ENCODE measurements at regions of chr4 and their contacts with region 1.

Region 1: GRCh38 chr4:155371432-155372043 is 5.2 kb downstream of the MAP9 start:
- DNase-seq: peak; percentile 48
- ATAC-seq: no peak
- H3K4me3 ChIP-seq: no peak overlapping the region
- H3K4me3 Mint-ChIP-seq: no peak overlapping the region
- H3K27ac ChIP-seq: no peak overlapping the region
- H3K27ac Mint-ChIP-seq: no peak overlapping the region
- H3K4me1 ChIP-seq: peaks cover 0 to 8% of the 10 kb centered on the region in 2 donors
- H3K4me1 Mint-ChIP-seq: peaks cover 9% of the 10 kb centered on the region
- H3K27me3 ChIP-seq: no peaks in the 10 kb centered on the region
- H3K27me3 Mint-ChIP-seq: no peaks in the 10 kb centered on the region
- CTCF ChIP-seq: peak; percentile 80

Region 2: GRCh38 chr4:154551872-154552686 is 819.5 kb before region 1 on chr4:
- CTCF ChIA-PET with region 1: interaction called, 10 read pairs
- POLR2A ChIA-PET with region 1: interaction called, 4 read pairs
- intact Hi-C with region 1: loop called (anchors 1 kb)
- DNase-seq: peak; percentile 80
- ATAC-seq: peak; percentile 54
- H3K4me3 ChIP-seq: no peak overlapping the region
- H3K4me3 Mint-ChIP-seq: no peak overlapping the region
- H3K27ac ChIP-seq: no peak overlapping the region
- H3K27ac Mint-ChIP-seq: no peak overlapping the region
- H3K4me1 ChIP-seq: peaks cover 18% of the 10 kb centered on the region in 2 donors
- H3K4me1 Mint-ChIP-seq: peaks cover 21% of the 10 kb centered on the region
- H3K27me3 ChIP-seq: no peaks in the 10 kb centered on the region
- H3K27me3 Mint-ChIP-seq: no peaks in the 10 kb centered on the region
- CTCF ChIP-seq: peak; percentile 94

Region 3: DNA sequence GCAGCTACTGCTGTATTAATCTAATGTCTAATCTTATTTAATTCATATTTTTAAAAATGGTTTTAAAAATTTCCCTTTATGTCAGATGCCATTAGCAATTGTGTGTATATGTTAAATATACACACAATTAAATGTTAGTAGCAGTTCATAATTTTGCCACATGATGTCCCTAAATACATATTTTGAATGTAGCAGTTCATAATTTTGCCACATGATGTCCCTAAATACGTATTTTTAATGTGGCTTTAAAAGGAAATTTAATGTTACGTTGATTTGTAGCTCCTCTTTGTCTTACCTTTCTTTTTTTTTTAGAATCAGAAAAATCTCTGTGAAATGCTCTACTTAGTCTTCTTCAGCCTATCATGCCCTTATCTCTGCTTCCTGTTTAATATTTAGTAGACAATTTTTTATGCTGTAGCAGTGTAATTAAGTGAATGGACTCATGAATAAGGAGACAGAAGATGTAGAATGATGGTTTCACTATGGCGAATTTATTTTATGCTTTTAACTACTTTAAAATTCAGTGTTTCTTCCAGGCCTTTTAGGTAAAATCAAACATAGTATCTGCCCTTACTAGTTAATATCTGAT is 564.4 kb before region 1 on chr4:
- CTCF ChIA-PET with region 1: interaction called, 3 read pairs
- POLR2A ChIA-PET with region 1: no interaction called
- intact Hi-C with region 1: loop called (anchors 5 kb)
- DNase-seq: peak; percentile 19
- ATAC-seq: no peak
- H3K4me3 ChIP-seq: no peak overlapping the region
- H3K4me3 Mint-ChIP-seq: no peak overlapping the region
- H3K27ac ChIP-seq: no peak overlapping the region
- H3K27ac Mint-ChIP-seq: no peak overlapping the region
- H3K4me1 ChIP-seq: no peaks in the 10 kb centered on the region
- H3K4me1 Mint-ChIP-seq: no peaks in the 10 kb centered on the region
- H3K27me3 ChIP-seq: no peaks in the 10 kb centered on the region
- H3K27me3 Mint-ChIP-seq: peaks cover 7% of the 10 kb centered on the region
- CTCF ChIP-seq: peak; percentile 68

Region 4: DNA sequence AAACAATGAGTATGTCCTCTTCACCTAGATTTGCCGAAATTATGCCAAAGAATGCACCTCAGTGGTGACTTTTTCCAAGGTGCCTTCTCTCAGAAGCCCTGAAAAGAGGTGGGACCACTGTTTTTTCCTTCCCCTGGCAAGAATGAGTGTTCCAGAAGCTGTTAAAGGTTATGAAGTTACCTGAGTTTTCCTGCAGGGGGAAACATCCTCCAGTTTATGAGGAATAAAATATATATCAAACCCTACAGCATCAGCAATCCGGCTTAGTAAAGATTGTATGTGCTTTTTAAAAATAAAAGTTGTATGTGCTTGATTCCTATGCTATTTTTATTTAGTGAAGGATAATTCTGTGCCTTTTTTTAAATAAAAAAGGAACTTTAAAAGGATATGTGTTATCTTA is 517.2 kb before region 1 on chr4:
- CTCF ChIA-PET with region 1: interaction called, 3 read pairs
- POLR2A ChIA-PET with region 1: no interaction called
- intact Hi-C with region 1: loop called (anchors 2 kb)
- DNase-seq: no peak
- ATAC-seq: no peak
- H3K4me3 ChIP-seq: no peak overlapping the region
- H3K4me3 Mint-ChIP-seq: no peak overlapping the region
- H3K27ac ChIP-seq: no peak overlapping the region
- H3K27ac Mint-ChIP-seq: no peak overlapping the region
- H3K4me1 ChIP-seq: no peaks in the 10 kb centered on the region
- H3K4me1 Mint-ChIP-seq: no peaks in the 10 kb centered on the region
- H3K27me3 ChIP-seq: no peaks in the 10 kb centered on the region
- H3K27me3 Mint-ChIP-seq: peaks cover 7% of the 10 kb centered on the region
- CTCF ChIP-seq: peak; percentile 24

Region 5: DNA sequence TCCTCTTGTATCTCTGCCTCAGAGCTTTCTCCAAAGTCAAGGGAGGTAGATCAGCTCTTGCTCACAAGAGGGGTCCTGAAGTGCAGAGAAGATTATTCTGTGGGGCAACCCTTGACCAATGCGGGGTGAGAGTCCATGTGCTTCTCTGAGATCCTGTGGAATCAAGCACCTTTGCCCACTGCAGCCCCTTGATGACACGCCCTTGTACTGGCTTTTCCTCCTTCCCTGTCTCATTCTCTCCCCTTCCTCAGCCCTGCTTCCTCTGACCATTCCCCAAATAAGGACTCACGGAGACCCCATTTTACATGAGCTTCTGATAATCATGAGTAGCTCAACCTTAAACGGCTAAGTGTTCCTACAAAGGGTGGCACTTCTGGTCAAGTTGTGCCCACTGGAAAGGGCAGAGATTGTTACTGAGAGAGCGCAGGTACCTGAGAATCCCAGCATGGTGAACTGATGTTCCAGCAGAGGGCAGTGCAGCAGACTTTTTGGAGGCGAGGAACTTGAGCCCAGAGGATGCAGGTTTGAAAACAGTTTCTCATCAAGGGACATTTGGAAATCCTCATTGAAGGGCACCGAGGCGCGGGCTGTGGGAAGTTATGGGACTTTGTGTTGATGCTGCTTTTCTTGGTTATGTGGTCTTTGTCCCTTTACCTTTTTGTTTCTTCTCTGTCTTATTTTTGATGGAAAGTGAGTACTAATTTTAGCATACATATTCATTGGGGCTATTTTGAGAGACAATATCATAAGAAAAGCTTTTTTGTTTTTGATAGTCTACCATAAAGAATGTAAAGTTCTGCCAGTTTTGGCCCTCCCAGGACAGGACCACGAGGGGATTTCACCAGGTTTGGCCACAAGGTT is 389.1 kb before region 1 on chr4:
- CTCF ChIA-PET with region 1: no interaction called
- POLR2A ChIA-PET with region 1: no interaction called
- intact Hi-C with region 1: loop called (anchors 2 kb)
- DNase-seq: peak; percentile 29
- ATAC-seq: no peak
- H3K4me3 ChIP-seq: no peak overlapping the region
- H3K4me3 Mint-ChIP-seq: no peak overlapping the region
- H3K27ac ChIP-seq: no peak overlapping the region
- H3K27ac Mint-ChIP-seq: no peak overlapping the region
- H3K4me1 ChIP-seq: no peaks in the 10 kb centered on the region
- H3K4me1 Mint-ChIP-seq: no peaks in the 10 kb centered on the region
- H3K27me3 ChIP-seq: no peaks in the 10 kb centered on the region
- H3K27me3 Mint-ChIP-seq: no peaks in the 10 kb centered on the region
- CTCF ChIP-seq: peak; percentile 64

Region 6: GRCh38 chr4:155339588-155339987 is 31.9 kb before region 1 on chr4:
- CTCF ChIA-PET with region 1: no interaction called
- POLR2A ChIA-PET with region 1: no interaction called
- intact Hi-C with region 1: no loop called
- DNase-seq: no peak
- ATAC-seq: no peak
- H3K4me3 ChIP-seq: no peak overlapping the region
- H3K4me3 Mint-ChIP-seq: no peak overlapping the region
- H3K27ac ChIP-seq: no peak overlapping the region
- H3K27ac Mint-ChIP-seq: no peak overlapping the region
- H3K4me1 ChIP-seq: no peaks in the 10 kb centered on the region
- H3K4me1 Mint-ChIP-seq: no peaks in the 10 kb centered on the region
- H3K27me3 ChIP-seq: peaks cover 0 to 4% (median 0%) of the 10 kb centered on the region in 4 experiments
- H3K27me3 Mint-ChIP-seq: no peaks in the 10 kb centered on the region
- CTCF ChIP-seq: no peak